T-cell (primary cell): ENCODE measurements at regions of chr19 and their contacts with region 1.

Region 1: DNA sequence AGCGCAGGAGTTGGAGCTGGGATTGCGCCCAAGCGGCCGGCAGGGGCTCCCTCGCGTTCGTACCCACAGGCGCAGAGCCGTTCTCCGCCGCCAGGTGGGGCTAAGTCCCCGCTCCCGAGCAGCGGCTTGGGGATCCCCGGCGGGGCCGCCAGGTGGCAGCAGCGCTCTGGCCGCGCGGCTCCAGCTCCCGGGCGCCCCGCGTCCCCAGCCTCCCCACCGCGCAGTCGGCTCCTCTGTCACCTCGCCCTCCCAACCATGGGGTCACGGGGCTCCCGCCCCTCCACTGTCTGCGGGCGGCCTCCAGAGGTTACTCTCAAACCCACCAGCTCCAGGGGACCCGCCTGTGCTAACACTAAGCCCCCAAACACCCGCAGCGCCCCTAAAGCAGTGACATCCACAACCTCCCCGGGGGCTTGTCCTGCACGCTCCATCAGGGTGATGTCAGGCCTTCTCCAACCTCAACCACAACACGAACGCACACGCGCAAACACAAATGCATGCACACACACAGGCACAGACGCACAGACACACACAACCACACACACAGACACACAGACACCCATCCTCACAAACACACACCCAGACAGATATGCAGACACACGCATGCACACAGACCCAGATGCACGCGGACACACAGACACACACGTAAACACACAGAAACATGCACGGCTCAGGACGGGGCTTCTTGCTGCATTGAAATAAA is 18.4 kb upstream of the KCTD15 start:
- DNase-seq: peak; percentile 53 to 90 (median 80)
- ATAC-seq: peak; percentile 90 to 97 (median 94)
- H3K4me3 ChIP-seq: no peak overlapping the region
- H3K4me3 Mint-ChIP-seq: peak overlapping the region in 1 of 3 donors; percentile 41
- H3K27ac ChIP-seq: no peak overlapping the region
- H3K27ac Mint-ChIP-seq: no peak overlapping the region
- H3K4me1 ChIP-seq: peaks cover 0 to 11% of the 10 kb centered on the region in 2 experiments
- H3K4me1 Mint-ChIP-seq: peaks cover 4 to 19% (median 14%) of the 10 kb centered on the region in 3 donors
- H3K27me3 ChIP-seq: peaks cover 0 to 64% of the 10 kb centered on the region in 2 experiments
- H3K27me3 Mint-ChIP-seq: peaks cover 28 to 33% of the 10 kb centered on the region in 2 donors

Region 2: GRCh38 chr19:32373585-32374295 is 1404.5 kb before region 1 on chr19:
- CTCF ChIA-PET with region 1: no interaction called
- POLR2A ChIA-PET with region 1: no interaction called
- DNase-seq: no peak
- ATAC-seq: no peak
- H3K4me3 ChIP-seq: no peak overlapping the region
- H3K4me3 Mint-ChIP-seq: no peak overlapping the region
- H3K27ac ChIP-seq: no peak overlapping the region
- H3K27ac Mint-ChIP-seq: no peak overlapping the region
- H3K4me1 ChIP-seq: no peaks in the 10 kb centered on the region
- H3K4me1 Mint-ChIP-seq: peaks cover 9 to 11% (median 11%) of the 10 kb centered on the region in 3 donors
- H3K27me3 ChIP-seq: no peaks in the 10 kb centered on the region
- H3K27me3 Mint-ChIP-seq: no peaks in the 10 kb centered on the region

Region 3: GRCh38 chr19:33815380-33816340 is 37.4 kb after region 1 on chr19:
- CTCF ChIA-PET with region 1: no interaction called
- POLR2A ChIA-PET with region 1: no interaction called
- DNase-seq: no peak
- ATAC-seq: no peak
- H3K4me3 ChIP-seq: no peak overlapping the region
- H3K4me3 Mint-ChIP-seq: no peak overlapping the region
- H3K27ac ChIP-seq: no peak overlapping the region
- H3K27ac Mint-ChIP-seq: no peak overlapping the region
- H3K4me1 ChIP-seq: peaks cover 0 to 16% of the 10 kb centered on the region in 2 experiments
- H3K4me1 Mint-ChIP-seq: peaks cover 1 to 25% (median 7%) of the 10 kb centered on the region in 3 donors
- H3K27me3 ChIP-seq: peaks cover 0 to 24% of the 10 kb centered on the region in 2 experiments
- H3K27me3 Mint-ChIP-seq: peaks cover under 1 to 3% of the 10 kb centered on the region in 2 donors

Region 4: GRCh38 chr19:33860312-33861090 is 82.3 kb after region 1 on chr19:
- CTCF ChIA-PET with region 1: no interaction called
- POLR2A ChIA-PET with region 1: no interaction called
- DNase-seq: no peak
- ATAC-seq: no peak
- H3K4me3 ChIP-seq: no peak overlapping the region
- H3K4me3 Mint-ChIP-seq: no peak overlapping the region
- H3K27ac ChIP-seq: no peak overlapping the region
- H3K27ac Mint-ChIP-seq: no peak overlapping the region
- H3K4me1 ChIP-seq: no peaks in the 10 kb centered on the region
- H3K4me1 Mint-ChIP-seq: no peaks in the 10 kb centered on the region
- H3K27me3 ChIP-seq: peaks cover 0 to 5% of the 10 kb centered on the region in 2 experiments
- H3K27me3 Mint-ChIP-seq: peaks cover 0 to 2% of the 10 kb centered on the region in 2 donors

Region 5: GRCh38 chr19:33902802-33903488 is 124.7 kb after region 1 on chr19:
- CTCF ChIA-PET with region 1: no interaction called
- POLR2A ChIA-PET with region 1: no interaction called
- DNase-seq: no peak
- ATAC-seq: no peak
- H3K4me3 ChIP-seq: no peak overlapping the region
- H3K4me3 Mint-ChIP-seq: no peak overlapping the region
- H3K27ac ChIP-seq: no peak overlapping the region
- H3K27ac Mint-ChIP-seq: no peak overlapping the region
- H3K4me1 ChIP-seq: peaks cover 0 to 9% of the 10 kb centered on the region in 2 experiments
- H3K4me1 Mint-ChIP-seq: peaks cover 5 to 12% (median 10%) of the 10 kb centered on the region in 3 donors
- H3K27me3 ChIP-seq: peaks cover 15 to 35% of the 10 kb centered on the region in 2 experiments
- H3K27me3 Mint-ChIP-seq: peaks cover 49 to 53% of the 10 kb centered on the region in 2 donors

Region 6: GRCh38 chr19:34096020-34096915 is 318.0 kb after region 1 on chr19:
- CTCF ChIA-PET with region 1: interaction called in 1 of 2 experiments, 12 read pairs
- POLR2A ChIA-PET with region 1: no interaction called
- DNase-seq: peak in 1 of 35 experiments; percentile 51
- ATAC-seq: no peak
- H3K4me3 ChIP-seq: no peak overlapping the region
- H3K4me3 Mint-ChIP-seq: no peak overlapping the region
- H3K27ac ChIP-seq: no peak overlapping the region
- H3K27ac Mint-ChIP-seq: no peak overlapping the region
- H3K4me1 ChIP-seq: no peaks in the 10 kb centered on the region
- H3K4me1 Mint-ChIP-seq: peaks cover 0 to 2% (median 2%) of the 10 kb centered on the region in 3 donors
- H3K27me3 ChIP-seq: peaks cover 2 to 3% of the 10 kb centered on the region in 2 experiments
- H3K27me3 Mint-ChIP-seq: peaks cover 17 to 20% of the 10 kb centered on the region in 2 donors